ENCODE measurements at regions of chr2 and their contacts with region 1.

Region 1: GRCh38 chr2:162297925-162298552 is 20.4 kb downstream of the IFIH1 start:
- DNase-seq: peak; percentile 74 to 88 (median 78)
- ATAC-seq: peak; percentile 84
- H3K4me3 ChIP-seq: no peak overlapping the region
- H3K27ac ChIP-seq: no peak overlapping the region
- H3K4me1 ChIP-seq: peaks cover 3% of the 10 kb centered on the region
- H3K27me3 ChIP-seq: no peaks in the 10 kb centered on the region
- CTCF ChIP-seq: peak; percentile 58 to 94 (median 83)
- POLR2A ChIP-seq: no peak

Region 2: DNA sequence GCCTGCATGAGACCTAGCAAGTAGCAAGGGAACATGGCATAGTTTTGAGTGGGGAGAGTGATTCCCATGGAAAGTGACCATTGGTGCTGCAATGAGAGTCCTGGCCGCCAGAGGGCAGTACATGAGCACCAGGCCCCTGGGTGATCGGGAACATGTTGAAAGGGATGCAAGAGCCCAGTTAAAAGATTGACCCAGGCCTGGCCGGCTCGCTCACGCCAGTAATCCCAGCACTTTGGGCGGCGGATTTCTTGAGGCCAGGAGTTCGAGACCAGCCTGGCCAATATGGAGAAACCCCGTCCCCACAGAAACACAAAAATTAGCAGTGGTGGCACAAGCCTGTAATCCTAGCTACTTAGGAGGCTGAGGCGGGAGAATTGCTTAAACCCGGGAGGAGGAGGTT is 77.0 kb before region 1 on chr2:
- intact Hi-C with region 1: loop called (anchors 5 kb)
- DNase-seq: peak; percentile 63 to 78 (median 71)
- ATAC-seq: peak; percentile 94
- H3K4me3 ChIP-seq: no peak overlapping the region
- H3K27ac ChIP-seq: no peak overlapping the region
- H3K4me1 ChIP-seq: no peaks in the 10 kb centered on the region
- H3K27me3 ChIP-seq: no peaks in the 10 kb centered on the region
- CTCF ChIP-seq: peak; percentile 73 to 88 (median 80)
- POLR2A ChIP-seq: no peak

Region 3: GRCh38 chr2:162989507-162989906 is 691.5 kb after region 1 on chr2:
- intact Hi-C with region 1: no loop called
- DNase-seq: no peak
- ATAC-seq: no peak
- H3K4me3 ChIP-seq: no peak overlapping the region
- H3K27ac ChIP-seq: no peak overlapping the region
- H3K4me1 ChIP-seq: no peaks in the 10 kb centered on the region
- H3K27me3 ChIP-seq: no peaks in the 10 kb centered on the region
- CTCF ChIP-seq: peak in 2 of 7 experiments; percentile 9 to 10
- POLR2A ChIP-seq: no peak